ENCODE measurements at regions of chr4 and their contacts with region 1.

Region 1: GRCh38 chr4:88035292-88035691 is 27.9 kb downstream of the PKD2 start:
- DNase-seq: no peak
- H3K4me3 ChIP-seq: no peak overlapping the region
- H3K27ac ChIP-seq: no peak overlapping the region
- H3K4me1 ChIP-seq: no peaks in the 10 kb centered on the region
- H3K27me3 ChIP-seq: no peaks in the 10 kb centered on the region
- CTCF ChIP-seq: no peak
- POLR2A ChIP-seq: no peak

Region 2: DNA sequence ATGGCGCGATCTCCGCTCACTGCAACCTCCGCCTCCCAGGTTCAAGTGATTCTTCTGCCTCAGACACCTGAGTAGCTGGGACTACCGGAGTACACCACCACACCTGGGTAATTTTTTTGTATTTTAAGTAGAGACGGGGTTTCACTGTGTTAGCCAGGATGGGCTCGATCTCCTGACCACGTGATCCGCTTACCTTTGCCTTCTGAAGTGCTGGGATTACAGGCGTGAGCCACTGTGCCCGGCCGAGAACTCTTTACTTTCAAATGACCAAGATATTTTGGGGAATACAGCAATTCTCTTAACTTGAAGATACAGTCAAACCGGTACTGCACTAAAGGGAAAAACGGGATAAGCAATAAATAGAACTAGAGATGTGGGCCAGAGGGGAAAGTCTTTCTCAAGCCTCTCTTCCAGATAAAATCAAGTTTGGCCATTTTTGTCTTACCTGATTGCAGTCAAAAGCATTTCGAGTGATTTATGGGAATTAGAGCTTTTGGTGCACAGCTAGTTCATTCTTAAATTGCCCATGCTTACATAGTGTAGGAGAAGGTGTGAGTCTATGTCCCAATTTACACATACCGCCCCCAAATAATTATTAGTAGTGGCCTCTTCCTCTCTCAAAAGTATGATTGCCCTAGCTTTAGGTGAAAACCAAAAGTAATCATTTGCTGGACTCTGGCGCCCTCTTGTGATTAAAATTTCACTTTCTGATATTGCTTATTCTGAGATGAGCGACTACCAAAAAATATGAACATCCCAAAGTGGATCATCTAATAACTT is 176.4 kb after region 1 on chr4:
- intact Hi-C with region 1: loop called (anchors 5 kb)
- DNase-seq: no peak
- H3K4me3 ChIP-seq: no peak overlapping the region
- H3K27ac ChIP-seq: no peak overlapping the region
- H3K4me1 ChIP-seq: peaks cover 0 to 3% (median 0%) of the 10 kb centered on the region in 3 donors
- H3K27me3 ChIP-seq: no peaks in the 10 kb centered on the region
- CTCF ChIP-seq: peak; percentile 55 to 84 (median 71)
- POLR2A ChIP-seq: no peak

Measured in esophagus squamous epithelium (tissue), 5 donors.